ENCODE measurements at regions of chr15 and their contacts with region 1.

Region 1: DNA sequence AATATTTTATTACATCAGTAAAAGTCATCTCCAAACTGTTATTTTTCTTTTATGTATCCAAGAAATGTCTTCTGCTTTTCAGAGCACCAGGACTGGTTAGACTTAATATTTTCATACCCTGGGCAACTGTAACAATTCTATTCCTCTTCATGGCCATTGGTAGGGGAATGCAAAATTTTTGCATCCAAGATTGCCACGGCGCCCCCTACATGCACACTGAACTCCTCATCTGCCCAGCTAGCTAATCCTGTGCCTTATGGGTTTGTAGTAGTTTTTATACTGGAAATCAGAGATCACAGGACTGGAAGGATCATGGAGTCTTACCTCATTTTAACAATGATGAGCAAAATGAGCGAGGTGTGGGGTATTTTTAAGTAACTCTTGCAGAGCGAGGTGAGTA is 74.2 kb downstream of the CRTC3 start:
- DNase-seq: no peak
- H3K4me3 ChIP-seq: no peak overlapping the region
- H3K27ac ChIP-seq: no peak overlapping the region
- H3K4me1 ChIP-seq: peaks cover 4 to 16% (median 10%) of the 10 kb centered on the region in 4 experiments
- H3K27me3 ChIP-seq: 0 out of 7 replicates have a peak, but pooled peaks cover 0 to 5% (median 0%) of the 10 kb centered on the region in 4 experiments
- CTCF ChIP-seq: peak; percentile 35 to 58 (median 58)
- EP300 ChIP-seq: no peak
- POLR2A ChIP-seq: no peak
- RAD21 ChIP-seq: peak; percentile 26 to 51; a peak in 3 of 4 replicates

Region 2: DNA sequence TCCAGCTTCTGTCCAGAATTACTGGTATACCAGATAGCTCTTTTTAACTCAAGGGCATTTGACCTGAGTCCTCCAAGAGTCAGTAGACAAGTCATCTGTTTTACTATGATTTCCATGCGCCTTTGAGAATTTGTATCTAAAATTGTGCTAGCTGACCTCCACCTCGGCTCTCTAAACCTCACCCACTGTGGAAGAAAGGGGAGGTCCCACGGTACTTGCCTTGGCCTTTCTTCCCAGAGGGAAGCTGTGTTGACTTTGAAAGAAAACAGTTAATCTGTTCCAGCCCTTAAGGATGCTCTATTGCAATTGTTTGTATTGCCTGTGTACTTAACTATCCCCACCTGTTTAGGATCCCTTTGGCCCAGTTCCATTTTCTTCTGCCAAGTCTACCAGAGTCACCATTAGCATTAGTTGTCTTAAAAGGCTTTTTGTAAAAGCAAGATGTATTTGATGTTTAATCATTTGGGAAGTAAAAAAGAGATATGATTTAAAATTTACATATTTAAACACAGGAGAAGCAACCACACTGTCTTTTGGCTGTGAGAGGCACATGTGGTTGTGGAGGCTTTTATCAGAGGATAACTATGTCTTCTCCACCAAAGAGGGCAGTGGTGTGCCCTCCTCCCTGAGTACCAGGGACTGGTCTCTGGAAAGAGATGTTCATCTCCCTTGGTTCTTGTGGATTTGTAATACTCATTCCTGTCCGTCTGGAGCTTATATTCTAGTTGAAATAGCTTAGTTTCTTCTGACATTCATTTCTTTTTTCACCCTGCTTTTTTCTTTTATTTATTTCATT is 14.6 kb after region 1 on chr15:
- CTCF ChIA-PET with region 1: interaction called, 10 read pairs
- POLR2A ChIA-PET with region 1: interaction called, 3 read pairs
- DNase-seq: no peak
- H3K4me3 ChIP-seq: no peak overlapping the region
- H3K27ac ChIP-seq: no peak overlapping the region
- H3K4me1 ChIP-seq: peaks cover 0 to 3% (median 0%) of the 10 kb centered on the region in 4 experiments; a peak in 2 of 7 replicates
- H3K27me3 ChIP-seq: no peaks in the 10 kb centered on the region
- CTCF ChIP-seq: peak in 2 of 3 experiments; percentile 3 to 11; a peak in 2 of 4 replicates
- EP300 ChIP-seq: no peak
- POLR2A ChIP-seq: no peak
- RAD21 ChIP-seq: no peak

Region 3: DNA sequence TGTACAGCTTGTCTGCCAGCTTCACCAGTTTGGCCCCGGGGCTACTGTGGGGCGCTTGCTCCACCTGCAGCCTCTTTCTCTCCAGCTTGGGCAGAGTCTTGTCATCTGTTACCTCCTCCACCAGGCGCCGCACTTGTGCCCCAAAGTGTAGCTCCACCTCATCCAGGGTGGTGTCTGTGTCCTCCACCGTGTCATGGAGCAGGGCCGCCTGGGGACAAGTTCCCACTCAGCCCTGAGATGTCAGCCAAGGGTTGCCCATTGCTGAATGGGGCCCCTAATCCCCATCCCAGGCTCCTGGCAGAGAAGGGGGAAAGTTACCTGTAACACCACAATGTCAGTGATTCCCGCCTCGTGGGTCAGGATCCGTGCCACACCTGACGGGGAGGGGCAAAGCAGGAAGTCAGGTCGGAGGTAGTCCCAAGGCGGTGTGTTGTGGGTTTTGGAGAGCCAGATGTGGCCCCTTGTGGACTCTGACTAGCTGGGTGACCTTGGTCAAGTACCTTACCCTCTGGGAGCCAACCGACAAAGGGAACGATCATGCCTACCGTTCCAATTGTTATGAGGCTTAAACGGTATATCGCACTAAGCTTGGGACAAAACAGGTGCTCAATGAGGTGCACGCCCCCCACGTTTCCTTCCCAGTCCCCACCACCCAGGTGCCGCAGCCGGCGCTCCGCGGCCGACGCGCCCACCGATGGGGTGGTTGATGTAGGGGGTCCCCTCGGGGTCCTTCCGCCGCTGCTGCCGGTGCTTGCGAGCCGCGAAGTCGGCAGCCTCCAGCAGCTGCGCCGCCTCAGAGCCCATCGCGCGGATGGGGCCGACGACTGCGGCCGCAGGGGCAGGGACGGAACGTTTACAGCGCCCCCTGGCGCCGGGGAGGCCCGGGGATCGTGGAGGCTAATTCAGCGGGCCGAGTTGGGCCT is 328.1 kb after region 1 on chr15 and contains the start of gene HDDC3:
- CTCF ChIA-PET with region 1: no interaction called
- POLR2A ChIA-PET with region 1: no interaction called
- DNase-seq: peak in 1 of 2 experiments; percentile 99
- H3K4me3 ChIP-seq: peak within 1 kb of the TSS; percentile 58 to 83 (median 76)
- H3K27ac ChIP-seq: peak within 1 kb of the TSS; percentile 39; the same call in 1 of the 2 replicates
- H3K4me1 ChIP-seq: peaks cover 0 to 13% (median 7%) of the 10 kb centered on the region in 4 experiments; a peak in 6 of 7 replicates
- H3K27me3 ChIP-seq: 0 out of 7 replicates have a peak, but pooled peaks cover 0 to 4% (median 0%) of the 10 kb centered on the region in 4 experiments
- CTCF ChIP-seq: peak; percentile 82 to 96 (median 93)
- EP300 ChIP-seq: no peak
- POLR2A ChIP-seq: no peak; a peak in 1 of 3 replicates
- RAD21 ChIP-seq: peak; percentile 39 to 65
- total RNA-seq, gene HDDC3: 16.3 and 17.0 TPM in 2 replicates

Measured in H1 (cell line).